H1 (cell line): ENCODE measurements at regions of chr2 and their contacts with region 1.

Region 1: DNA sequence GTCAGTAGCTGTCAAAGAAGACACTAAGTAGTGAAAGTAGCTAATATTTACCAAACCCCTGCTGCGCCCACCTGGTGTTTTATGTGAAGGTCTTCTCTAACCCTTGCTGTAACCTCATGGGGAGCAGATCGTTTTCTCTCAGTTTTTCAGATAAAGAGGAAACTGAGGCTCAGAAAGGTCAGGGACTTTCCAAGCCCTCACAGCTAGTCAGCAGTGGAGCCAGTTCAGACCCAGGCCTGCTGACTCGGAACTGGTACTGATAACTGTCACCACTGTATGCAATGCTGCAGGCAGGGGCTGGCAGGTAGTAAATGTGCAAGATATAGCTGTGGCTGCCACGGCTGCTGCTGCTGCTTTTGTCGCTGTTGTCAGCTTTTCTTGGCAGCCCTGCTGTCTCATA is 69.1 kb downstream of the LRRFIP1 start:
- DNase-seq: no peak
- H3K4me3 ChIP-seq: no peak overlapping the region
- H3K27ac ChIP-seq: no peak overlapping the region
- H3K4me1 ChIP-seq: peaks cover 21 to 39% (median 32%) of the 10 kb centered on the region in 4 experiments
- H3K27me3 ChIP-seq: peaks cover 0 to 9% (median 3%) of the 10 kb centered on the region in 4 experiments; a peak in 3 of 7 replicates
- CTCF ChIP-seq: no peak
- EP300 ChIP-seq: no peak
- POLR2A ChIP-seq: no peak
- RAD21 ChIP-seq: no peak

Region 2: DNA sequence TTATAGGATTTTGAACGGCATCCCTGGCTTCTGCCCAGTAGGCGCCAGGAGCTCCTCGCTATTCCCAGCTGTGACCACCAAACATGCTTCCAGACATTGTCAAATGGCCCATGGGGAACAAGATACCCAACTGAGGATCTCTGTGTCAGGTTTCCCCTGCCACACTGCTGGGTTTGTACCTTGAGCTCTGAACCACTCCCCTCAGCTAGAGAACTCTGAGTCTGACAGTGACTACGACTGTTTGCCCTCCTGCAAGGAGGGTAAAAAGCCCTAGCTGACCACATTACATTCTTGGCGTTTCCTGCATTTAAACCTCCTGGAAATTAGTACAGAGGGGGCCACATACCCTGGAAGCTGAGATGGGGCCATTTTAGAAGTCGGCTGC is 56.6 kb before region 1 on chr2:
- CTCF ChIA-PET with region 1: no interaction called
- POLR2A ChIA-PET with region 1: no interaction called
- DNase-seq: no peak
- H3K4me3 ChIP-seq: no peak overlapping the region
- H3K27ac ChIP-seq: no peak overlapping the region
- H3K4me1 ChIP-seq: no peaks in the 10 kb centered on the region
- H3K27me3 ChIP-seq: no peaks in the 10 kb centered on the region
- CTCF ChIP-seq: no peak
- EP300 ChIP-seq: no peak
- POLR2A ChIP-seq: no peak
- RAD21 ChIP-seq: no peak

Region 3: DNA sequence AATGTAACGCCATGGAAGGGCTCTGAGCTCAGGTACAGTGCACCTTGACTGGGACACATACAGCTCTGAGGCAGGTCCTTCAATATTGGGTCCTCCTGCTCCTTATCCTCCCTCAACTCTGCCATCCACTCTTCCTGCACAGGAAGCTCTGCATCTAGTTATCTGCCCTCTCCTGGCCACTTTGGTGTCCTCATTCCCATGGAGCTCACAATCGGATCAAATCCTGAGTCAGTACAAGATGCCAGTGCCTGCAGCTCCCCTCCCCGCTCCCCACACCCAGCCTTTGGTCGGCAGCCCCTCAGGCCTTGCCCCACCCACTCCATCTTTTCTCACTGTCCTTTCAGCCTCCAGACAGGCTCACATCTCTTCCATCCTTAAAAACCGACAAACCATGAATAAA is 11.1 kb before region 1 on chr2:
- CTCF ChIA-PET with region 1: interaction called, 17 read pairs
- POLR2A ChIA-PET with region 1: interaction called, 7 read pairs
- DNase-seq: no peak
- H3K4me3 ChIP-seq: no peak overlapping the region
- H3K27ac ChIP-seq: no peak overlapping the region
- H3K4me1 ChIP-seq: no peaks in the 10 kb centered on the region
- H3K27me3 ChIP-seq: no peaks in the 10 kb centered on the region
- CTCF ChIP-seq: peak; percentile 35 to 67 (median 57)
- EP300 ChIP-seq: no peak
- POLR2A ChIP-seq: no peak
- RAD21 ChIP-seq: peak; percentile 44 to 64

Region 4: DNA sequence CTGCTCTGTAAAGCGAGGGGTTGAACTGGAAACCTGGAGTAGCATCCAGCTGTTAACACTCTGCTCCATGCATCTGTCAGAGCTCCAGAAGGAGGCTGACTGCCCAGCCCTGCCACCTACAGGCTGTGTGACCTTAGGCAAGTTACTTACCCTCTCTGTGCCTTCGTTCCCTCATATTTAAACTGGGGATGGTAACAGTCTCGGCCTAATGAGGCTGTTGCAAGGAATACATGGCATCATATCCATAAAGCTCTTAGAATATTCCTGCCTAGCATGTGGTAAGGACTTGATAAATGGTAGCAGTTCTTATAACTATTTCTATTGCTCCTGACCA is 11.6 kb after region 1 on chr2:
- CTCF ChIA-PET with region 1: interaction called, 11 read pairs
- POLR2A ChIA-PET with region 1: interaction called, 6 read pairs
- DNase-seq: no peak
- H3K4me3 ChIP-seq: no peak overlapping the region
- H3K27ac ChIP-seq: no peak overlapping the region
- H3K4me1 ChIP-seq: peaks cover 0 to 25% (median 9%) of the 10 kb centered on the region in 4 experiments; a peak in 6 of 7 replicates
- H3K27me3 ChIP-seq: no peaks in the 10 kb centered on the region
- CTCF ChIP-seq: no peak
- EP300 ChIP-seq: no peak
- POLR2A ChIP-seq: no peak
- RAD21 ChIP-seq: no peak